Lower leg skin (tissue), 4 donors: ENCODE measurements at regions of chr9 and their contacts with region 1.

Region 1: DNA sequence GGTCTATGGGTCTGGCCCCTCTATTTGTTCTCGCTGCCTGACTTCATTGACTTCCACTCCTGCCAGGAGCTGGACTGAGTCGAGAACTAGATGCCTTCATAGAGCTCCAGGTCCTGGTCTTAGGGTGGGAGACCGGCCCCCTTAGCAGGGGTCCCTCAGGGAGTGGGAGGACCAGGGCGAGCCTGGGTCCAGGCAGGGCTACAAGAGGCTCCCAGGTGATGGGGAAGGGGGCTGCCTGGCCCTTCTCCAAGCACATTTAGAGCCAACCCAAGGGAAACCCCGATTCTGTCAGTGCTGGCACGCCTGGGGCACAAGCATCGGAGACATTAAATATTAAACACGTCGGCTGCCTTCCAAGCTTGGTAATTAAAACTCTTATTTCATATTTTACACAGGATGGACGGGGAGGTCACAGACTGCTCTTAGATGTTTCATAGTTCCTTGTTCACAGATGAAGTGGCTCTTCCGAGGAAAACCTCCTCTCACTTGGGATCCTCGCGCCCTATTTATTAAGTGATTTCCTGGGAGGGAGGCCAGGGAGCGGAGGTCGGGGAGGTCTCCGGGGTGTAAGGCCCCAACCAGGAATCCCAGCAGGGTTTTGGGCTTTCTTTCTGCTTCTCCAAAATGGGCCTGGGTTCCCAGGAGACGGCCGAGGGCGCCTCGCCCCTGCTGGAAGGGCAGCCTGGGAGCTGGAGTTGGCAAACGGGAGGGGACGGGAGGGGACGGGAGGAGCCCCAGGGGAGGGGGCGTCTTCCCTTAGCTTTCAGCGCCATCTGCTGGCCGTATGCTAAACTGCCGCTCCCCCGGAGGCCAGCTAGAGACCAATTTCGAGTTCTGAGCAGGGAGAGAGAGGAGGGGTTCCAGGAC is 23.4 kb upstream of the ZBTB43 start:
- DNase-seq: peak; percentile 76 to 97
- H3K4me3 ChIP-seq: no peak overlapping the region
- CTCF ChIP-seq: peak in 1 of 3 donors; percentile 23
- POLR2A ChIP-seq: no peak

Region 2: DNA sequence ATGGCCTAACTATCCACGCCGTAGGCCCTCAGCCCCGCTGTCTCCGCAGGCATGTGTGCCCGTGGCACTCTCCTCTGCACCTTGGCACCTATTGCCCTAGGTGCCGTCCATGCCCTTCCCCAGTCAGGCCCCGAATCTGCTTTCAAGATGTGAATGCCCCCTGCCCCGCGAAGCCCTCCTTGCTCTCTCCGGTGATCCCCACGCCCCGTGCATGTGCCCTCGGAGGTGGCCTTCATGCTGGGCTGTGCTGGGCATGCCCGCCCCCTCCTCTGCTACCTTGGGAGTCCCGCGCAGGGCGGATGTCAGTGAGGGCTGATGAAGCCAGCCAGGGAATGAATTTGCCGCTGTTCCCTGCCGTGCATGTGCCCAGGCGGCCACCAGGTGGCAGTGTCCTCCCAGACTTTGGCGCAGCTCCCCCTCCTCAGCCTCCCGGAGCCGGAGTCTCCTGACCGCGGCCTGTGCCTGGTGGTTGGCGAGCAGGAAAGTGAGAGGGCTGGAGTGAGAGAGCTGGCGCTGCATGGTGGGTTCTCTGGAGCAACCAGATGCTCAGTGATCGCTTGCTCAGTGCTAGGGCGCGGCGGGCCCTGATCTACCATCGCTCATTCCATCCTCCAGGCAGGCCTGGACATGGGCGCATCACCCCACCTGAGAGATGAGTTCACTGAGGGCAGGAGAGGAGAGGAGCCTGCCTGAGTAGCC is 280.6 kb before region 1 on chr9:
- intact Hi-C with region 1: loop called (anchors 2 kb)
- DNase-seq: peak; percentile 47 to 95
- H3K4me3 ChIP-seq: no peak overlapping the region
- CTCF ChIP-seq: peak in 2 of 3 donors; percentile 3 to 63
- POLR2A ChIP-seq: no peak

Region 3: GRCh38 chr9:126611592-126612325 is 169.7 kb before region 1 on chr9:
- intact Hi-C with region 1: loop called (anchors 5 kb)
- DNase-seq: peak; percentile 42 to 94
- H3K4me3 ChIP-seq: no peak overlapping the region
- CTCF ChIP-seq: peak in 1 of 3 donors; percentile 72
- POLR2A ChIP-seq: no peak

Region 4: GRCh38 chr9:126704873-126705766 is 76.3 kb before region 1 on chr9:
- intact Hi-C with region 1: loop called (anchors 2 kb)
- DNase-seq: peak; percentile 76 to 96
- H3K4me3 ChIP-seq: no peak overlapping the region
- CTCF ChIP-seq: peak in 1 of 3 donors; percentile 80
- POLR2A ChIP-seq: no peak